Activated T-helper 1 cell treated with anti-CD3 and anti-CD28 coated beads, Interleukin-12 subunit alpha, Interleukin-12 subunit beta, Interleukin-2, Interleukin-4 antibody, amounts not matched to agents 30 ng/mL and 10 ng/mL and 1 ng/mL, durations not matched to agents 14 hours and 24 hours and 36 hours (primary cell): ENCODE measurements at regions of chr7 and their contacts with region 1.

Region 1: GRCh38 chr7:102834999-102835398 is 77.8 kb upstream of the LRRC17 start:
- DNase-seq: peak; percentile 5
- H3K4me3 Mint-ChIP-seq: no peak overlapping the region
- H3K27ac Mint-ChIP-seq: peak overlapping the region; percentile 41
- H3K4me1 Mint-ChIP-seq: peaks cover 11% of the 10 kb centered on the region
- H3K27me3 Mint-ChIP-seq: peaks cover 10% of the 10 kb centered on the region

Region 2: DNA sequence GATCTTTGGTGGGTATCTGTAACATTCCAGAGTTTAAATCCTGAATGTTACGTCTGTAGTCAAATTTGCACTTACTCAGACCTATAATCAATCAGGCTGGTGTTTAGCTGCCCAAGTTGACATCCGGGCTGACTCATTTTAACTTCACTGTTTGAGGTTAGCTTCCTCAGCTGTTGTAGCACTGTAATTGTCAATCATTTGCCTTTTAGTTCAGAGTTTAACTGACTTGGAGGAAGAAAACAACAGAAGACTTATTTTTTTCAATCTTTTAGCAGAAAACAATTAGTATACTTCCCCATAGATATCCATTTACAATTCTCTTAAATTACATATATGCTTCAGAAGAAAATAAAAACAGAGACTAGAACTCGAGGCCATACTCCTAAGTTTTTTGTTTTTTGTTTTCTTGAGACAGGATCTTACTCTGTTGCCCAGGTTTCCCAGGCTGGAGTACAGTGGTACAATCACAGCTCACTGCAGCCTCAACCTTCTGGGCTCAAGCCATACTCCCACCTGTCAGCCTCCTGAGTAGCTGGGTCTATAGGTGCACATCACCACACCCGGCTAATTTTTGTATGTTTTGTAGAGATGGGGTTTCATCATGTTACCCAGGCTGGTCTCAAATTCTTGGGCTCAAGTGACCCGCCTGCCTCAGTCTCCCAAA is 39.3 kb after region 1 on chr7:
- intact Hi-C with region 1: loop called (anchors 1 kb)
- DNase-seq: peak; percentile 19
- H3K4me3 Mint-ChIP-seq: no peak overlapping the region
- H3K27ac Mint-ChIP-seq: peak overlapping the region; percentile 32
- H3K4me1 Mint-ChIP-seq: peaks cover 34% of the 10 kb centered on the region
- H3K27me3 Mint-ChIP-seq: peaks cover 5% of the 10 kb centered on the region